ENCODE measurements at regions of chr20 and their contacts with region 1.

Region 1: GRCh38 chr20:36214684-36215256 is 21.5 kb upstream of the AAR2 start:
- DNase-seq: peak; percentile 18
- H3K4me3 ChIP-seq: no peak overlapping the region
- H3K27ac ChIP-seq: no peak overlapping the region
- H3K4me1 ChIP-seq: no peaks in the 10 kb centered on the region
- H3K27me3 ChIP-seq: no peaks in the 10 kb centered on the region
- CTCF ChIP-seq: peak; percentile 72

Region 2: GRCh38 chr20:36399147-36399968 is 184.6 kb after region 1 on chr20:
- CTCF ChIA-PET with region 1: interaction called, 4 read pairs
- dilution Hi-C with region 1: no loop called
- in situ Hi-C with region 1: no loop called
- intact Hi-C with region 1: loop called (anchors 1 kb)
- DNase-seq: peak; percentile 53
- H3K4me3 ChIP-seq: no peak overlapping the region
- H3K27ac ChIP-seq: no peak overlapping the region
- H3K4me1 ChIP-seq: no peaks in the 10 kb centered on the region
- H3K27me3 ChIP-seq: peaks cover 4% of the 10 kb centered on the region
- CTCF ChIP-seq: peak; percentile 42 to 44